Natural killer cell (primary cell): ENCODE measurements at regions of chr3 and their contacts with region 1.

Region 1: GRCh38 chr3:105868742-105869530 is at the start of gene CBLB:
- DNase-seq: peak; percentile 84 to 93
- ATAC-seq: peak; percentile 83 to 97 (median 90)
- H3K4me3 ChIP-seq: peak within 1 kb of the TSS; percentile 99
- H3K4me3 Mint-ChIP-seq: peak within 1 kb of the TSS; percentile 100
- H3K27ac ChIP-seq: peak within 1 kb of the TSS; percentile 91
- H3K27ac Mint-ChIP-seq: peak within 1 kb of the TSS; percentile 95 to 97
- H3K4me1 ChIP-seq: peaks cover 3% of the 10 kb centered on the region
- H3K4me1 Mint-ChIP-seq: peaks cover 59 to 62% of the 10 kb centered on the region in 2 donors
- H3K27me3 ChIP-seq: no peaks in the 10 kb centered on the region
- H3K27me3 Mint-ChIP-seq: no peaks in the 10 kb centered on the region
- CTCF ChIP-seq: no peak
- total RNA-seq, gene CBLB: 180 to 287 (median 230) TPM

Region 2: DNA sequence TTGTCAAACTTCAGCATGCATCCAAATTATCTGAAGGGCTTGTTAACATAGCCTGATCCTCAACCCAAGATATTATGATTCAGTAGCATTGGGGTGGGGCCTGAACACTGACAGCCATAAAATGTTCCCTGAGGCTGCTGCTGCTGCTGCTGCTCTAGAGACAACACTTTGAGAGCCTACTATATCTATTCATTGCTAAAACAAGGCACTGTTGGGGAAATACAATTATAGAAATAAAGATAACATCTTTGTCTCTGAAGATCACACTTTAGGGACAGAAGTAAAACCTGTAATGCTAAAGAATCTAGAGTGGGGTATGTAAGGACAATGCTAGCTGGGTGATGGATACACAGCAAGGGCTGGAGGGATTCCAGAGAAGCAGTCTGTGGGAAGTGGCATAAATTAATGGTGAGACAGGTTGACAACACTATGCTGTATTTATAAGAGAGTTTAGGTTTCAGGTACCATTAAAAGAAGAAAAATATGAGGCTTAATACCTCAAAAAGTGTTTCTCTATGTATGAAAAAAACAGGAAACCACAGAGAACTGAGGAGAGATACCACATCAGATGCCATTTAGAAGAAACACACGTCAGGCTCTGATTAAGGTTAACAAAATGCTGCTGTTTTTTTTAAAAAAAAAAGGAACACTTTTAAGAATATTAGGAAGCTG is 116.1 kb before region 1 on chr3:
- intact Hi-C with region 1: loop called (anchors 2 kb)
- DNase-seq: peak; percentile 30 to 83
- ATAC-seq: peak; percentile 71 to 82 (median 81)
- H3K4me3 ChIP-seq: peak overlapping the region; percentile 16
- H3K4me3 Mint-ChIP-seq: peak overlapping the region; percentile 93
- H3K27ac ChIP-seq: peak overlapping the region; percentile 96
- H3K27ac Mint-ChIP-seq: peak overlapping the region; percentile 85 to 93
- H3K4me1 ChIP-seq: peaks cover 37% of the 10 kb centered on the region
- H3K4me1 Mint-ChIP-seq: peaks cover 52 to 72% of the 10 kb centered on the region in 2 donors
- H3K27me3 ChIP-seq: no peaks in the 10 kb centered on the region
- H3K27me3 Mint-ChIP-seq: no peaks in the 10 kb centered on the region
- CTCF ChIP-seq: no peak

Region 3: DNA sequence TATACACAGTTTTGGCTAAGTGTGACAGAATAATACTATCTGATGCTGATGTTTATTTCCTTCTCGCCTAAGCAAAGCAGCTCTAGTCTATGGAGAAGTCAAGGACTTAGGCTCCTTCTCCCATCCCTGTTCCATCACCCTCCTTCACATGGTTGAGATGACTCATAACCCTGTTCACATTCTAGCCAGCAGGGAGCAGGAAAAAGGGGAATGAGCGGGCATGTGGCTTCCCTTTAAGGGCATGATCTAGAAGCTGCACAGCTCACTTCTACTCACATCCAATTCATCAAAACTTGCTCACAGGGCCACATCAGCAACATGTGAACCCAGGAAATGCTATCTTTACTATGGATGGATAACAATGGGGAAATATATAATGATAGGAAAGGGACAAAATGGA is 41.0 kb before region 1 on chr3:
- intact Hi-C with region 1: loop called (anchors 1 kb)
- DNase-seq: peak in 1 of 2 donors; percentile 40
- ATAC-seq: no peak
- H3K4me3 ChIP-seq: no peak overlapping the region
- H3K4me3 Mint-ChIP-seq: peak overlapping the region; percentile 30
- H3K27ac ChIP-seq: peak overlapping the region; percentile 56
- H3K27ac Mint-ChIP-seq: peak overlapping the region; percentile 83
- H3K4me1 ChIP-seq: peaks cover 28% of the 10 kb centered on the region
- H3K4me1 Mint-ChIP-seq: peaks cover 87 to 88% of the 10 kb centered on the region in 2 donors
- H3K27me3 ChIP-seq: no peaks in the 10 kb centered on the region
- H3K27me3 Mint-ChIP-seq: no peaks in the 10 kb centered on the region
- CTCF ChIP-seq: no peak

Region 4: DNA sequence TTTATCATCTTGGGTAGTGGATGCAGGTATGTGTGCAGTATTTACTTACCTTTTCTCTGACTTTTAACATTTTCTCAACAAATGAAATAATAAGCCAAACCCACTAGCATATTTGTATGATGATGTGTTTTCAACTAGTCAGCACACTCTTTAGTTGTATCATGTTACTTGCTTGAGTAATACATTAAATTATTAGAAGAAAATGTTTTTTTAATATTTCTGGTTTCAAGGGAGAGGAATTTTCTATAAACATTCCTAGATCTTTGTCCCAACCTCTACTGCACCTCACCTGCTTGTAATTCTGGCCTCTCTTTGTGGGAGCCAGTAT is 161.6 kb after region 1 on chr3:
- intact Hi-C with region 1: loop called (anchors 5 kb)
- DNase-seq: no peak
- ATAC-seq: no peak
- H3K4me3 ChIP-seq: no peak overlapping the region
- H3K4me3 Mint-ChIP-seq: no peak overlapping the region
- H3K27ac ChIP-seq: no peak overlapping the region
- H3K27ac Mint-ChIP-seq: no peak overlapping the region
- H3K4me1 ChIP-seq: no peaks in the 10 kb centered on the region
- H3K4me1 Mint-ChIP-seq: peaks cover 14 to 25% of the 10 kb centered on the region in 2 donors
- H3K27me3 ChIP-seq: no peaks in the 10 kb centered on the region
- H3K27me3 Mint-ChIP-seq: peaks cover 0 to 9% of the 10 kb centered on the region in 2 donors
- CTCF ChIP-seq: no peak

Region 5: GRCh38 chr3:106333911-106334618 is 465.1 kb after region 1 on chr3:
- intact Hi-C with region 1: loop called (anchors 10 kb)
- DNase-seq: peak in 1 of 2 donors; percentile 55
- ATAC-seq: peak; percentile 58 to 83 (median 80)
- H3K4me3 ChIP-seq: no peak overlapping the region
- H3K4me3 Mint-ChIP-seq: peak overlapping the region; percentile 64
- H3K27ac ChIP-seq: no peak overlapping the region
- H3K27ac Mint-ChIP-seq: peak overlapping the region; percentile 46 to 75
- H3K4me1 ChIP-seq: peaks cover 6% of the 10 kb centered on the region
- H3K4me1 Mint-ChIP-seq: peaks cover 40 to 47% of the 10 kb centered on the region in 2 donors
- H3K27me3 ChIP-seq: no peaks in the 10 kb centered on the region
- H3K27me3 Mint-ChIP-seq: no peaks in the 10 kb centered on the region
- CTCF ChIP-seq: no peak